ENCODE measurements at regions of chr11 and their contacts with region 1.

Region 1: DNA sequence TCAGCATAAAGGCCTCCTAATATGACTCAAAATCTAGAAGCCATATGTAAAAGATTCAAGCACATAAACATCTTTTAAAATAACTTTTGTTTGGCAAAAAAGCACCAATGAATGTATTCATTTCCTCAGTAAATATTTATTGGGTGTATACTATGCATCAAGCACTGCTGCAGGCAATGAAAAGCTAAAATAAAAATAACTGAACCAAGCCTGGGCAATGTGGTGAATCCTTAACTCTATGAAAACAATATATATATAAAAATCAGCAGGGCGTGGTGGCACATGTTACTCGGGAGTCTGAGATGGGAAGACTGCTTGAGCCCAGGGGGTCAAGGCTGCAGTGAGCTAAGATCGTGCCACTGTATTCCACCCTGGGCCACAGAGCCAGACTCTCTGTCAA is 27.8 kb downstream of the PIK3C2A start:
- DNase-seq: peak; percentile 45
- ATAC-seq: peak; percentile 94
- H3K4me3 ChIP-seq: no peak overlapping the region
- H3K27ac ChIP-seq: no peak overlapping the region
- H3K4me1 ChIP-seq: no peaks in the 10 kb centered on the region
- H3K27me3 ChIP-seq: no peaks in the 10 kb centered on the region
- CTCF ChIP-seq: no peak

Region 2: GRCh38 chr11:16831316-16832192 is 348.4 kb before region 1 on chr11:
- CTCF ChIA-PET with region 1: no interaction called
- POLR2A ChIA-PET with region 1: no interaction called
- intact Hi-C with region 1: no loop called
- DNase-seq: no peak
- ATAC-seq: no peak
- H3K4me3 ChIP-seq: no peak overlapping the region
- H3K27ac ChIP-seq: no peak overlapping the region
- H3K4me1 ChIP-seq: 0 out of 2 replicates have a peak, but pooled peaks cover under 1% of the 10 kb centered on the region
- H3K27me3 ChIP-seq: no peaks in the 10 kb centered on the region
- CTCF ChIP-seq: no peak

Region 3: DNA sequence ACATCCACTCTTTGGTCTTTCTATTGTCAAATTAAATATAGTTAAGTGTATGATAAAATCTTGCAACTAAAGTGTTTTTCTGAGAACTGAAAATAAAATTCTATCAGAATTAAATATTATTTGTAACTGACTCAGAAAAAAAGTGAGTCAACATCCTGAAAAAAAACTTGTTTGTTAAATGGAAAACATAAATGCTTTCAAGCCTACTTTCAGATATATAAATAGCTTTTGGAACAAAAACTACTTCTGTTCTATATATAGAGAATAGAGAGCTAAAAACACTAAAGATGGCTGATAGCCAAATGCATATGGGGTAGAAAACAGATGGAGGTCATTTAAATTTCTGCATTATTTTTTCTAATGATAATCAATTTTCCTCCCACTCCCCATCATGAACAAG is 34.0 kb before region 1 on chr11:
- CTCF ChIA-PET with region 1: interaction called, 3 read pairs
- POLR2A ChIA-PET with region 1: no interaction called
- intact Hi-C with region 1: loop called (anchors 1 kb)
- DNase-seq: peak; percentile 21
- ATAC-seq: peak; percentile 14; the same call in 1 of the 2 replicates
- H3K4me3 ChIP-seq: no peak overlapping the region
- H3K27ac ChIP-seq: no peak overlapping the region
- H3K4me1 ChIP-seq: peaks cover 7% of the 10 kb centered on the region
- H3K27me3 ChIP-seq: no peaks in the 10 kb centered on the region
- CTCF ChIP-seq: no peak

Measured in PC-3 (cell line).